Thyroid gland (tissue), 4 donors: ENCODE measurements at regions of chr6 and their contacts with region 1.

Region 1: GRCh38 chr6:111207141-111207850 is 120.0 kb downstream of the SLC16A10 start:
- DNase-seq: no peak
- H3K4me3 ChIP-seq: no peak overlapping the region
- H3K27ac ChIP-seq: no peak overlapping the region
- H3K4me1 ChIP-seq: peaks cover 10 to 18% of the 10 kb centered on the region in 2 donors
- H3K27me3 ChIP-seq: no peaks in the 10 kb centered on the region
- CTCF ChIP-seq: no peak
- POLR2A ChIP-seq: no peak

Region 2: GRCh38 chr6:111011360-111012142 is 195.7 kb before region 1 on chr6:
- intact Hi-C with region 1: loop called (anchors 5 kb)
- DNase-seq: no peak
- H3K4me3 ChIP-seq: no peak overlapping the region
- H3K27ac ChIP-seq: no peak overlapping the region
- H3K4me1 ChIP-seq: peaks cover 0 to 10% of the 10 kb centered on the region in 2 donors
- H3K27me3 ChIP-seq: no peaks in the 10 kb centered on the region
- CTCF ChIP-seq: peak; percentile 32 to 78 (median 66)
- POLR2A ChIP-seq: no peak

Region 3: DNA sequence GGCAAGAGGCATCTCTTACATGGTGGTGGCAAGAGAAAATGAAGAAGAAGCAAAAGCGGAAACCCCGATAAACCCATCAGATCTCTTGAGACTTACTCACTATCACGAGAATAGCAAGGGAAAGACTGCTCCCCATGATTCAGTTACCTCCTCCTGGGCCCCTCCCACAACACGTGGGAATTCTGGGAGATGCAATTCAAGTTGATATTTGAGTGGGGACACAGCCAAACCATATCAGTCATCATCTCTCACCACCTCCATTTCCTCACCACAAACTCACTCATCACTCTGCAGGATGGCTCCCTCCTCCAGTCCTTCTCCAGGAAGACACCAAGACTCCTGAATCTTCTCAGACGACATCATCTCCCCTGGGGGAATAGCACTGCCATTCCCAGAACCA is 145.8 kb before region 1 on chr6:
- intact Hi-C with region 1: loop called (anchors 10 kb)
- DNase-seq: no peak
- H3K4me3 ChIP-seq: no peak overlapping the region
- H3K27ac ChIP-seq: no peak overlapping the region
- H3K4me1 ChIP-seq: no peaks in the 10 kb centered on the region
- H3K27me3 ChIP-seq: no peaks in the 10 kb centered on the region
- CTCF ChIP-seq: no peak
- POLR2A ChIP-seq: no peak